ENCODE measurements at regions of chr1 and their contacts with region 1.

Region 1: DNA sequence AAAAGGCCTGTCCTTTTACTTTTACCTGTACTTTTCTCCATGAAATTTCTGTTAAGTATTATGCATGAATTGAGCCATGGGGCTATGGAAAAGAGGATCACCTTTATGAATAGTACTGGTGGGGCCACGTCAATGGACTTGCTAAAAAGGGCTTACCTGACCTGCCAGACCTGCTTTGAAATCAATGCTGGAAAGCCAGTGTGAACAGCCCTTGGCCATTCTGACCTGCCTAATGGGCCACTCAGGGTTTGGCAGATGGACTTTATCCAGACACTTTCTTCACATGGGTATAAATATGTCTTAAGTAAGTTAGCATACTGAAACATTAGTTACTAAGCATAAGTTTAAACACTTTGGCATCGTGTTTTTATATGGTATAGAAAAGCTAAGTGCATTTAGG is 8.3 kb upstream of the GUK1 start:
- DNase-seq: no peak
- ATAC-seq: no peak
- H3K4me3 ChIP-seq: no peak overlapping the region
- H3K27ac ChIP-seq: no peak overlapping the region
- H3K4me1 ChIP-seq: peaks cover 0 to 10% (median 0%) of the 10 kb centered on the region in 9 donors
- H3K27me3 ChIP-seq: peaks cover 0 to 12% (median 0%) of the 10 kb centered on the region in 7 donors
- CTCF ChIP-seq: no peak

Region 2: GRCh38 chr1:228165372-228166169 is 33.8 kb after region 1 on chr1 and contains the start of gene IBA57:
- intact Hi-C with region 1: loop called in 4 of 10 experiments (anchors 5 to 10 kb)
- DNase-seq: peak; percentile 99 to 100
- ATAC-seq: peak; percentile 86 to 93 (median 90)
- H3K4me3 ChIP-seq: peak within 1 kb of the TSS; percentile 33 to 83 (median 78)
- H3K27ac ChIP-seq: peak within 1 kb of the TSS; percentile 94 to 100 (median 100)
- H3K4me1 ChIP-seq: peaks cover 16 to 59% (median 48%) of the 10 kb centered on the region in 9 donors
- H3K27me3 ChIP-seq: peaks cover 0 to 18% (median 0%) of the 10 kb centered on the region in 7 donors
- CTCF ChIP-seq: peak; percentile 81 to 99 (median 91)
- total RNA-seq, gene IBA57: 9.3 to 20.3 (median 17.2) TPM

Region 3: DNA sequence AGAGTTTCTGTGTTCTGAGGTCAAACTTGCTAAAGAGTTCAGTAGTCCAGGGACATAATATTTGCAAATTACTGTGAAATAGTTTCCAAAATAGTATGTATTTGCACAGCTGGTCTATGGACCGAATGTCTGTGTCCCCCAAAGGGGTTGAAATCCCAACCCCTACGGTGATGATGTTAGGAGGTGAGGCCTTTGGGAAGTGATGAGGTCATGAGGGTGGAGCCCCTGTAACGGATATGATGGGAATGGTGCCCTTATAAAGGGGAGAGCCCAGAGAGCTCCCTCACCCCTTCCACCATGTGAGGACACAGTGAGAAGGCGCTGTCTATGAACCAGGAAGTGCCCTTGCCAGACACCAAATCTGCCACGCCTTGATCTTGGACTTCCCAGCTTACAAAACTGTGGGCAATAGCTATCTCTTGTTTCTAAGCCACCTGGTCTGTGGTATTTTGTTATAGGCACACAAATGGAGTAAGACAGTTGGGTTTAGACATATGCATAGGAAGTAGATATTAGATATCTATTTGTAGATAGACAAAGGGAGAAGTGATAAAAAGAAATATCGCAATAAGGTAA is 377.2 kb after region 1 on chr1:
- intact Hi-C with region 1: loop called in 1 of 10 experiments (anchors 5 kb)
- DNase-seq: no peak
- ATAC-seq: no peak
- H3K4me3 ChIP-seq: no peak overlapping the region
- H3K27ac ChIP-seq: no peak overlapping the region
- H3K4me1 ChIP-seq: no peaks in the 10 kb centered on the region
- H3K27me3 ChIP-seq: peaks cover 0 to 39% (median 4%) of the 10 kb centered on the region in 7 donors
- CTCF ChIP-seq: no peak

Region 4: DNA sequence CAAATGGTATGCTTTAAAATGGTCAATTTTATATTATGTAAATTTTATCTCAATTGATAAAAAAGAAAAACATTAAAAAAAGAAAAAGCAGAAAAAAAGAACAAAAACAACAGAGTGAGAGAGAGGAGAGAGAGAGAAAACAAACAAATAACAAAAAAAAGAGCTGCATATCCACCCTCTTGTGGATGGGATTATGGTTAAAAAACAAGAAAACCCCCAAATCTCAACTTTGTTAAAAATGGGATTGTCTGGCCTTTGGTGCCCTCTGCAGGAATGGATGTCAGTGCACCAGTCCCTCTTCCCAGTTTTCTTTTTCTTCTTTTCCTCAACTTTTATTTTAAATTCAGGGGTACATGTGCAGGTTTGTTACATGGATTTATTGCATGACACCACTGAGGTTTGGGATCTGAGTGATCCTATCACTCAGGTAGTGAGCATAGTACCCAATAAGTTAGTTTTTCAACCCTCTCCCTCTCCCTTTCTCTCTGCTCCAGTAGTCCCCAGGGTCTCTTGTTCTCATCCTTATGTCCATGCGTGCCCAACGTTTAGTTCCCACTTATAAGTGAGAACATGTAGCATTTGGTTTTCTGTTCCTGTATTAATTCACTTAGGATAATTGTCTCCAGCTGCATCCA is 383.6 kb after region 1 on chr1:
- intact Hi-C with region 1: loop called in 1 of 10 experiments (anchors 5 kb)
- DNase-seq: no peak
- ATAC-seq: peak in 1 of 8 donors; percentile 52
- H3K4me3 ChIP-seq: no peak overlapping the region
- H3K27ac ChIP-seq: no peak overlapping the region
- H3K4me1 ChIP-seq: no peaks in the 10 kb centered on the region
- H3K27me3 ChIP-seq: peaks cover 0 to 32% (median 0%) of the 10 kb centered on the region in 7 donors
- CTCF ChIP-seq: peak; percentile 27 to 77 (median 69)